Upper lobe of right lung (tissue), 1 donor: ENCODE measurements at regions of chr10 and their contacts with region 1.

Region 1: GRCh38 chr10:125158601-125159485 is 1.5 kb downstream of the CTBP2 start:
- DNase-seq: peak; percentile 84
- ATAC-seq: peak; percentile 61
- H3K4me3 ChIP-seq: peak overlapping the region; percentile 71
- H3K27ac ChIP-seq: peak overlapping the region; percentile 91
- H3K4me1 ChIP-seq: peaks cover 48% of the 10 kb centered on the region
- H3K27me3 ChIP-seq: no peaks in the 10 kb centered on the region
- CTCF ChIP-seq: no peak

Region 2: DNA sequence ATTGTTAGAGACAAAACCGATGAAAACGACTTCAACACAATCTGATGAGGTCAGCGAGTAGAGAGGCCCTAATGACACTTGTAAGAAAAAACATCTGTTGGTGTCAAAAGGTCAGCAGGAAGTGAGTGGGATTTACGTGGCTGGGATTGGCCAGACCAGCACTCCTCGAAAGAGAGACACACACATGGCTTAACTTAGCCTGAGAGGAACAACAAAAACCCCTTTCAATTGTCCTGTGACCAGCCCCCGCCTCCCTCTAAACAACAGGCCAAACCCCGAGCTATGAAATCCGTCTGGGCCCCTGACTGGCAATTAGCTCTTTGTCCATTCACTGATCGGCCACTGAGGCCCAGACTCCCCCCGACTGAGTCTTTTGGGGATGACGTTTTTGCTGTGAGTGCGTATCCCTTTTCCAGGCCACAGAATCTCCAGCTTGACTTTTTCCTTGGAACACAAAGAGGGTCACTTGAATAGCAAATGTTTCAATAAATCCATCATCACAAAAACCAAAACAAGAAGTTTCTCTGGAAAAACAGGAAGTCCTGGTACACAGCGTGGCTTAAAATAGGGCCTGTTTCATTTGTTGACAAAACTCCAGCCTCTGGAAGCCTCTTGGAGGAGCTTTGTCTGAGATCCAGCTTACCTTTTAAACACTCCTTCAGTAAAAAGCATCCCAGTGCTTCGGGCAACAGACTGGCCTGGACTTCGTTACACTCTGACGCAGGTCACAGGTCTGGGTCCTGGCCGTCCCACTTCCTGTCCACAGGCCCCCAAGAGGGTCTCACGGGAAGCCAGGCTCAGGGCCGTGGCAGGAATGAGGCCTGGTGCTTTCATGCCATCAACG is 101.5 kb before region 1 on chr10:
- intact Hi-C with region 1: loop called (anchors 10 kb)
- DNase-seq: no peak
- ATAC-seq: peak; percentile 66
- H3K4me3 ChIP-seq: no peak overlapping the region
- H3K27ac ChIP-seq: peak overlapping the region; percentile 87
- H3K4me1 ChIP-seq: peaks cover 71% of the 10 kb centered on the region
- H3K27me3 ChIP-seq: no peaks in the 10 kb centered on the region
- CTCF ChIP-seq: no peak

Region 3: GRCh38 chr10:125375210-125375609 is 216.4 kb after region 1 on chr10:
- intact Hi-C with region 1: no loop called
- DNase-seq: no peak
- ATAC-seq: no peak
- H3K4me3 ChIP-seq: no peak overlapping the region
- H3K27ac ChIP-seq: no peak overlapping the region
- H3K4me1 ChIP-seq: no peaks in the 10 kb centered on the region
- H3K27me3 ChIP-seq: no peaks in the 10 kb centered on the region
- CTCF ChIP-seq: no peak